CD8-positive, alpha-beta memory T cell (primary cell): ENCODE measurements at regions of chr3 and their contacts with region 1.

Region 1: DNA sequence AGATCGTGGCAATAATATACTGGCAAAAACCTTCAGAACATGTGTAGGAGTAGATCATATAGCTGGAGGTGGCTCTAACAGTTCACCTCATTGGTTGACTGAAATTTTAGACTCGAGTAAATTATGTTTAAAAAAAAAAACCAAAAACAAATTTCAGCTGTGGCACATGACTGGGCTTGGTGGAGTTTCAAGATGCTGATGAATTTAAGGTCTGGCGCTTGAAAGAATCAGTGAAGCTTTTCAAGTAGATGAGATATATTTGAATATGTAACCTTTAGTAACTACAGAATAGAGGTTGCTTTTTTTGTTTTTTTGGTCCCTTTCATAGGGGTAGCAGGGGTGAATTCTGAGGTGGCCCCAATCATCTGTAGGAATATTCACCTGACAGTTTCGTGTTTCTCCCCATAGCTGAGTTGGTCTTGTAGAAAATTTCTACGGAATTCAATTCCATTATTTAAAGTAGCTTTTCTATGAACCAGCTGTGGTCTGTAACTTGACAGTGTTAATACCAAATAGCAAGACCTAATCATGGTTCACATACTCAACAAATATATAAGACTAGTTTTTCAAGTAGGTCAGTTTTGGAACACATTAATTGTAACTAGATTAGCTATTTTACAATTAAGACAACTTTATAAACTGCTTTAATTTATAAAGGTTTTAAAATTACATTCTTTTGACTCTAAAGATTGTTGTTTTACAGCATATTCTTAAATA is 65.6 kb downstream of the MAP4 start:
- DNase-seq: no peak
- H3K4me3 ChIP-seq: no peak overlapping the region
- H3K4me3 Mint-ChIP-seq: no peak overlapping the region
- H3K27ac ChIP-seq: no peak overlapping the region
- H3K27ac Mint-ChIP-seq: no peak overlapping the region
- H3K4me1 ChIP-seq: no peaks in the 10 kb centered on the region
- H3K4me1 Mint-ChIP-seq: peaks cover 0 to 1% (median 0%) of the 10 kb centered on the region in 3 donors
- H3K27me3 ChIP-seq: no peaks in the 10 kb centered on the region
- H3K27me3 Mint-ChIP-seq: no peaks in the 10 kb centered on the region

Region 2: GRCh38 chr3:46646700-46647099 is 1303.9 kb before region 1 on chr3:
- CTCF ChIA-PET with region 1: no interaction called
- POLR2A ChIA-PET with region 1: interaction called, 22 read pairs
- DNase-seq: no peak
- H3K4me3 ChIP-seq: no peak overlapping the region
- H3K4me3 Mint-ChIP-seq: no peak overlapping the region
- H3K27ac ChIP-seq: no peak overlapping the region
- H3K27ac Mint-ChIP-seq: no peak overlapping the region
- H3K4me1 ChIP-seq: no peaks in the 10 kb centered on the region
- H3K4me1 Mint-ChIP-seq: no peaks in the 10 kb centered on the region
- H3K27me3 ChIP-seq: no peaks in the 10 kb centered on the region
- H3K27me3 Mint-ChIP-seq: peaks cover 12 to 67% of the 10 kb centered on the region in 2 donors